ENCODE measurements at regions of chr9 and their contacts with region 1.

Region 1: DNA sequence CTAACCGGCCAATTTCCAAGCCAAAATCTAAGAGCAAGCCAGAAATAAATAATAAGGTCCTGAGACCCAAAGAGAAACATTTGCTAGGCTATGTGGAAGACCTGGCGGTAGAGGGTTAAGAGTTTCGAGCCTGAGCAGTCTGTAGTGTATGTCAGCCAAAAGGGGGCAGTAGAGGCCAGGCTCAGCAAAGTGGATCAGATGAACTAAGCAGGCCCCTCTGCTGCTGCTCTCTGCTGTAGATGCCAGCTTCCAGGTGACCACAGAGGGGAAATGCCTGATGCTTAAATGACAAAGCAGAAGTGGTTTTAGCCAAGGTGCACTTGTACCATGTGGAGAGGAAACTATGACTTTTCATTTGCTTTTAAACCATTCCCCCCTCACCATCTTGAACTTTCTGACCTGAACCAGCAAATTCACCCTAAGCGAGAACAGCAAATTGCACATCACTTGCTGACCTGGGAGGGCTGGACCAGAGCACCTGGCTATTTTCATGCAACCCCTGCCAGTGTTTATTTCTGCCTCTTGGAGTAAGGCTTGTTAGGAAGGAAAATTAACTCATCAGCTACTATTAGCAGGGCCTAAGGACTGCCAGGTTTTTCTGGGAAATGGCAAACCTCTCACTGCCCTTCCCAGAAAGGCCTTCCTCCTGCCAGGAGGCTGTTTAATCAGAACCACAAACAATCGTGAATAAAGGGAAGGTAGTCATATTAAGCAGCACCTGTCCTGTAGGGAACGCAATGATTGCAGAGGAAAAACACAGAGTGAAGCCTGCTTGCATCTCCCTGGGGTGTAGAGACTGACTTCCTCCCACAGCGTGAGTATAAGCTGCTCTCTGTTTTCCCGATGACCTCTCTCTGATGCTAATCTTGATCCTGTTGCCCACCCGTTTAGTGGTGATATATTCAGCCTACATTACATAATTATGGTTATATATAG is 818.2 kb downstream of the TLR4 start:
- DNase-seq: peak; percentile 51 to 56
- H3K4me3 ChIP-seq: no peak overlapping the region
- H3K4me3 Mint-ChIP-seq: no peak overlapping the region
- H3K27ac Mint-ChIP-seq: no peak overlapping the region
- H3K4me1 ChIP-seq: no peaks in the 10 kb centered on the region
- H3K4me1 Mint-ChIP-seq: no peaks in the 10 kb centered on the region
- H3K27me3 ChIP-seq: no peaks in the 10 kb centered on the region
- H3K27me3 Mint-ChIP-seq: no peaks in the 10 kb centered on the region
- CTCF ChIP-seq: peak; percentile 54 to 55

Region 2: GRCh38 chr9:118295413-118295812 is 226.9 kb before region 1 on chr9:
- CTCF ChIA-PET with region 1: no interaction called
- POLR2A ChIA-PET with region 1: no interaction called
- intact Hi-C with region 1: no loop called
- DNase-seq: no peak
- H3K4me3 ChIP-seq: no peak overlapping the region
- H3K4me3 Mint-ChIP-seq: no peak overlapping the region
- H3K27ac Mint-ChIP-seq: no peak overlapping the region
- H3K4me1 ChIP-seq: no peaks in the 10 kb centered on the region
- H3K4me1 Mint-ChIP-seq: no peaks in the 10 kb centered on the region
- H3K27me3 ChIP-seq: no peaks in the 10 kb centered on the region
- H3K27me3 Mint-ChIP-seq: no peaks in the 10 kb centered on the region
- CTCF ChIP-seq: no peak

Region 3: DNA sequence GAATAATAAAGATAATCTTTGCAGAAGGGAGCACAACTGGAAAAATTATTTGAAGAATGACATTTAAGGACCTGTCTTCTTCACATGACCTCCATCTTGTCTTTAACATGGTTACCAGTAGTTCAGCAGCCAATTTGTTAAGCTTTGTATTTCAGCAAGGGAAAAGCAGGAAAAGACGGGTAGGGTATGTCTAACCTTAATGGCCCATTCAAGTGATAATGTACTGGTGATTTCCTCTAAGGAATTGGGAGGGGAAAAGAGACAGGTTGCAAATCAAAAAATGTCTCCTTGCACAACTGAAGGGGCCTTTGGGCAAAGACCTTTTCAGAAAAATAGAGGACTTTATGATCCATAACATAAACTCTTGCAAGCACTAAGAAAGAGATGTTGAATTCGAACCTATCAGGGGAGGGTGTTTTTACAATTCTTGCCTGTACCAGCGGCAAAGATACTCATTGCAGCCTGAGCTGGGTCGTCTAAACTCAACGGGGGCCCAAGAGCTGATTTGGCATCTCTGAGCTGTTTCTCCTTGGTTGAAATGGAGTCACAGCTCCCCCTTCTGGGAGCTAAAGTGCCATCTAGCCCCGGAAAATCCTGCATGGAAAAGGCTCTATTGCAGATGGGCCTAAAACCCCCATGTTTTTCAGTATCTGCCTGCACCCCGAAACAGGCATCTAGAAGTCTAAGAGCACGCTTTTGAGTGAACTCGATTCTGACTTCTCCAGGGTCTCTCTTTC is 843.1 kb after region 1 on chr9:
- CTCF ChIA-PET with region 1: no interaction called
- POLR2A ChIA-PET with region 1: no interaction called
- intact Hi-C with region 1: loop called (anchors 5 kb)
- DNase-seq: peak; percentile 38 to 40
- H3K4me3 ChIP-seq: no peak overlapping the region
- H3K4me3 Mint-ChIP-seq: no peak overlapping the region
- H3K27ac Mint-ChIP-seq: no peak overlapping the region
- H3K4me1 ChIP-seq: no peaks in the 10 kb centered on the region
- H3K4me1 Mint-ChIP-seq: no peaks in the 10 kb centered on the region
- H3K27me3 ChIP-seq: no peaks in the 10 kb centered on the region
- H3K27me3 Mint-ChIP-seq: peaks cover 10% of the 10 kb centered on the region
- CTCF ChIP-seq: peak; percentile 43 to 52